ENCODE measurements at regions of chr15 and their contacts with region 1.

Region 1: GRCh38 chr15:85831415-85832113 is 36.8 kb upstream of the KLHL25 start:
- DNase-seq: peak in 5 of 9 donors; percentile 6 to 21 (median 12)
- ATAC-seq: peak; percentile 44
- H3K4me3 ChIP-seq: no peak overlapping the region
- H3K4me3 Mint-ChIP-seq: no peak overlapping the region
- H3K27ac ChIP-seq: no peak overlapping the region
- H3K27ac Mint-ChIP-seq: no peak overlapping the region
- H3K4me1 ChIP-seq: no peaks in the 10 kb centered on the region
- H3K4me1 Mint-ChIP-seq: no peaks in the 10 kb centered on the region
- H3K27me3 ChIP-seq: no peaks in the 10 kb centered on the region
- H3K27me3 Mint-ChIP-seq: peaks cover 0 to 9% (median 0%) of the 10 kb centered on the region in 5 donors

Region 2: GRCh38 chr15:85730001-85730820 is 101.4 kb before region 1 on chr15:
- CTCF ChIA-PET with region 1: interaction called, 74 read pairs
- POLR2A ChIA-PET with region 1: no interaction called
- intact Hi-C with region 1: loop called in 1 of 2 experiments (anchors 1 kb)
- DNase-seq: peak in 7 of 9 donors; percentile 48 to 72 (median 62)
- ATAC-seq: peak; percentile 90
- H3K4me3 ChIP-seq: no peak overlapping the region
- H3K4me3 Mint-ChIP-seq: no peak overlapping the region
- H3K27ac ChIP-seq: no peak overlapping the region
- H3K27ac Mint-ChIP-seq: peak overlapping the region; percentile 7 to 88 (median 47)
- H3K4me1 ChIP-seq: no peaks in the 10 kb centered on the region
- H3K4me1 Mint-ChIP-seq: peaks cover 0 to 28% (median 14%) of the 10 kb centered on the region in 7 donors
- H3K27me3 ChIP-seq: no peaks in the 10 kb centered on the region
- H3K27me3 Mint-ChIP-seq: no peaks in the 10 kb centered on the region